ENCODE measurements at regions of chr12 and their contacts with region 1.

Region 1: DNA sequence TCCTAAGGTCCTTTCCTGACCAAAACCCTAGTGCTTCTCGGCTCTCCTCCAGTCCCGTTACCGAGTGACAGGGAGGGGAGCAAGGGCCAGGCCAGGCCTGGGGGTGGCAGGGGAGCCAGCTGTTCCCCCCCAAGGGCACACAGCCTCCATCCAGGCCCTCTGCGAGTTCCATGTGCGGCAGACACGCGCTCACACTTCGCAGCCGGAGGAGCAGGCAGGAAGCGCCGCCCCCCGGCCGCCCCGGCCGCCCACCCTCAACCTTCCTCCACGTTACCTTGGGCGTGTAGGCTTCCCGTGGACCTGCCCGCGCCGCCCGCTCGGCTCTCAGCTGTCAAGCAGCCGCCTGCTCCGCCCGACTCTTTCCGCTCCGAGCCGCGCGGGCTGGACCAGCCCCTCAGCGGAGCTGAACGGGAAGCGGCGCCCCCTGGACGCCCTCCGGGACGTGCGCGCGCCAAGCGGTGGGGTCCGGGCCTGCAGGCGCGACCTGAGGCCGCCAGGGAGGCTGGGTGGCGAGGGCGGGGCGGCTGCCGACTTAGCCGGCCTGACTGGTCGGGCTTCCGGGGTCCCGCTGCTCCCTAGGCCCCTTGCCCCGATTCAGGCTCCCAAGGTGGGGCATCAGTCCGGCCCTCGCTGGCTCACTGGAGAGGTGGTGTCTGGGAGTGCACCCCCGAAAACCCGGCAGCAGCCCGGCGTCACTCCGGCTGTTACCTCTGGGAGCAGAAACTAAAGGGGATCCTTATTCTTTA is at the start of gene CRACR2A:
- DNase-seq: peak; percentile 71 to 94 (median 85)
- ATAC-seq: peak; percentile 81
- H3K4me3 ChIP-seq: peak within 1 kb of the TSS; percentile 63 to 81
- H3K4me3 Mint-ChIP-seq: peak within 1 kb of the TSS; percentile 84
- H3K27ac ChIP-seq: peak within 1 kb of the TSS; percentile 94 to 95
- H3K27ac Mint-ChIP-seq: peak within 1 kb of the TSS; percentile 95
- H3K4me1 ChIP-seq: peaks cover 45% of the 10 kb centered on the region
- H3K4me1 Mint-ChIP-seq: peaks cover 62% of the 10 kb centered on the region
- H3K27me3 ChIP-seq: no peaks in the 10 kb centered on the region
- H3K27me3 Mint-ChIP-seq: no peaks in the 10 kb centered on the region
- CTCF ChIP-seq: peak; percentile 87
- total RNA-seq, gene CRACR2A: 17.9 TPM

Region 2: DNA sequence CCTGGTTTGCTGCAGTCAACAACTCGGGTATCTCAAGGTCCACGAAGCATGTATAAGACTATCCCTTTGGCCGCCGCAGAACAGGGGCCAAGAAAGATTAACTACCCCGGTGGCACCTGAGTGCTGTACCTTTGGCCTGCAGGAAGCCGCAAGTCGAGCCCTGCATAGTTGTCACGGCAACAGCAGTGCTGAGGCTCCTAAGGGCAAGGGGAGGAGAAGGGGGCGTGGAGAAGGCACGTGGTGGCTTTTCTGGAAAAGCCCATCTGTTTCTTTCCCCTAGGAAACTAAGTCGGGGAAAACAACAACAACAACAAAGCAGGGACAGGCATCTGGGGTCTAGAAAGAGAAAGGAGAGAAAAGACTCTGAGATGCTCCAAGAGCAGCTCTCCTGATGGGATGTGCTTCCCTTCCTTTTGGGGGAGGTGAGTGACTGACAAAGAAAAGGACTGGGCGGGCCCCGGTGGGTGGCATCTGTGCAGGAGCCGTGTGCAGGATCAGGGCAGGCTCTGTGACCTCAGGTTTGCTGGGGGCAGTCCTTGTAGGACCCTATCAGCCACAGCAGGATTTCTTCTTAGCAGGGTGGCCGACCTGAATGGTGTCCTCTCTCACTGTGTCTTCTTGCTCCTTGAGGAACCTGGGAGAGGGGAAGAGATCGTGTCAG is 138.0 kb before region 1 on chr12:
- CTCF ChIA-PET with region 1: no interaction called
- POLR2A ChIA-PET with region 1: no interaction called
- intact Hi-C with region 1: no loop called
- DNase-seq: no peak
- ATAC-seq: no peak
- H3K4me3 ChIP-seq: no peak overlapping the region
- H3K4me3 Mint-ChIP-seq: no peak overlapping the region
- H3K27ac ChIP-seq: no peak overlapping the region
- H3K27ac Mint-ChIP-seq: no peak overlapping the region
- H3K4me1 ChIP-seq: no peaks in the 10 kb centered on the region
- H3K4me1 Mint-ChIP-seq: no peaks in the 10 kb centered on the region
- H3K27me3 ChIP-seq: no peaks in the 10 kb centered on the region
- H3K27me3 Mint-ChIP-seq: no peaks in the 10 kb centered on the region
- CTCF ChIP-seq: no peak

Region 3: GRCh38 chr12:3658327-3659163 is 94.4 kb before region 1 on chr12:
- CTCF ChIA-PET with region 1: no interaction called
- POLR2A ChIA-PET with region 1: interaction called, 5 read pairs
- intact Hi-C with region 1: loop called in 1 of 2 experiments (anchors 2 kb)
- DNase-seq: peak in 7 of 9 experiments; percentile 7 to 60 (median 39)
- ATAC-seq: no peak
- H3K4me3 ChIP-seq: no peak overlapping the region
- H3K4me3 Mint-ChIP-seq: no peak overlapping the region
- H3K27ac ChIP-seq: no peak overlapping the region
- H3K27ac Mint-ChIP-seq: no peak overlapping the region
- H3K4me1 ChIP-seq: no peaks in the 10 kb centered on the region
- H3K4me1 Mint-ChIP-seq: no peaks in the 10 kb centered on the region
- H3K27me3 ChIP-seq: no peaks in the 10 kb centered on the region
- H3K27me3 Mint-ChIP-seq: no peaks in the 10 kb centered on the region
- CTCF ChIP-seq: peak; percentile 38

Region 4: GRCh38 chr12:3727877-3728632 is 24.9 kb before region 1 on chr12:
- CTCF ChIA-PET with region 1: interaction called, 8 read pairs
- POLR2A ChIA-PET with region 1: interaction called, 8 read pairs
- intact Hi-C with region 1: loop called (anchors 1 to 2 kb)
- DNase-seq: peak in 8 of 9 experiments; percentile 17 to 90 (median 44)
- ATAC-seq: peak; percentile 81
- H3K4me3 ChIP-seq: peak overlapping the region in 1 of 2 experiments; percentile 9
- H3K4me3 Mint-ChIP-seq: peak overlapping the region; percentile 60
- H3K27ac ChIP-seq: peak overlapping the region; percentile 37 to 71
- H3K27ac Mint-ChIP-seq: peak overlapping the region; percentile 89
- H3K4me1 ChIP-seq: peaks cover 34% of the 10 kb centered on the region
- H3K4me1 Mint-ChIP-seq: peaks cover 35% of the 10 kb centered on the region
- H3K27me3 ChIP-seq: no peaks in the 10 kb centered on the region
- H3K27me3 Mint-ChIP-seq: no peaks in the 10 kb centered on the region
- CTCF ChIP-seq: no peak

Region 5: DNA sequence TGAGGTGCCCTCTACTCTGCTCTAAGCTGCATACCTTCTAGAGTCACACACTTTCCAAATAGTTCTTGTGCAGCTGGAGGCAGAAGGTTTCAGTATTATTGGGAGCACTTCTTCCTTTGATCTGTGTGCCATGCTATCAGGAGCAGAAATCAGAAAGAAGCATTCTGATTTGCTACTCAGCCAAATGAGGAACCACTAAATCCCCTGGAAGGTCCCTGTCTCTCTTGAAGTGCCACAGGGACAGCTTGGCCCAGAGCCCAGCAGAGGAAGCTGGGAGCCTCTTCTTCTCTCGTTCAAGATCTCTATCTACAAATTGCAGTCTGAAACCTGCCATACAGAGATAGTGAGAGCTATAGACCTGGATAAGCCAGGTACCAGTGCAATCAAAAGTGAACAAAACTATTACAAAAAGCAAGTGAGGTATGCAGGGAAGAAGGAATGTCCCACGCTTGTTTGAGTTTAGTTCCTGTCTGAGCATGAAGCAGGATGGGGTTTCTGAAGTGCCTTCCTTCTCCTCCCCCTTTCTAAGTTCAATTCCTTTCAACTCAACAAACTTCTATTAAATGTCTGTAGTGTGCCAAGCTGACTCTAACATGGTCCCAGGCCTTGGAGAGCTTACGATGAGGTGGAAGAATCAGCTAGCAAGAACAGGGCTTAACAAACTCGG is 221.2 kb after region 1 on chr12:
- CTCF ChIA-PET with region 1: no interaction called
- POLR2A ChIA-PET with region 1: no interaction called
- intact Hi-C with region 1: loop called in 1 of 2 experiments (anchors 1 kb)
- DNase-seq: peak in 1 of 9 experiments; percentile 49
- ATAC-seq: peak; percentile 22
- H3K4me3 ChIP-seq: peak overlapping the region in 1 of 2 experiments; percentile 4
- H3K4me3 Mint-ChIP-seq: peak overlapping the region; percentile 69
- H3K27ac ChIP-seq: peak overlapping the region in 1 of 2 experiments; percentile 44
- H3K27ac Mint-ChIP-seq: peak overlapping the region; percentile 81
- H3K4me1 ChIP-seq: peaks cover 66% of the 10 kb centered on the region
- H3K4me1 Mint-ChIP-seq: peaks cover 77% of the 10 kb centered on the region
- H3K27me3 ChIP-seq: no peaks in the 10 kb centered on the region
- H3K27me3 Mint-ChIP-seq: no peaks in the 10 kb centered on the region
- CTCF ChIP-seq: no peak

Region 6: DNA sequence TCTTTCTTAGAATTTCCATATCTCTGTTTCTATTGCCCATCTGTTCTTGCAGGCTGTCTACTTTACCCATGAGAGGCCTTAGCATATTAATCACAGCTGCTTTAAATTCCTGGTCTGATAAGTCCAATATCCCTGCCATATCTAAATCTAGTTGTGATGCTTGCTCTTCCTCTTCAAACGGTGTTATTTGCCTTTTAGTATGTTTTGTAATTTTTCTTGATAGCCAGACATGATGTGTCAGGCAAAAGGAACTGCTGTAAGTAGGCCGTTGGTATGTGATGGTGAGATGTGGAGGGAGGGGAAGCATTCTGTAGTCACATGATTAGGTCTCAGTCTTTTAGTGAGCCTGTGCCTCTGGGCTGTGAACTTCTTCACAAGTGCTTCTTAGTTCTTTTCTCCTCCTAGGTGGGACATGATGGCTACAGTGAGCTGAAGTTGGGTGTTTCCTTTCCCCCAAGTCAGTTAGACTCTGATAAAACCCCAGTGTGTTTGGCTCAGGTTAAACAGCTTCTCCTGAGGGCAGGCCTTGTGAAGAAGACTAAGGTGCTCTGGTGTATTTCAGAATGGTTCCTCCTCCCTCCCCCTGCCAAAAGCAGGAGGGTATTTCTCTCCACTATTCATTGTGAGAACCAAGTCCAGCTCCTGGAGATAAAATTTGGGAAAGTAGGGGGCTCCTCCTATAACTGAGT is 316.2 kb after region 1 on chr12:
- CTCF ChIA-PET with region 1: no interaction called
- POLR2A ChIA-PET with region 1: no interaction called
- intact Hi-C with region 1: no loop called
- DNase-seq: peak in 1 of 9 experiments; percentile 5
- ATAC-seq: no peak
- H3K4me3 ChIP-seq: no peak overlapping the region
- H3K4me3 Mint-ChIP-seq: no peak overlapping the region
- H3K27ac ChIP-seq: no peak overlapping the region
- H3K27ac Mint-ChIP-seq: no peak overlapping the region
- H3K4me1 ChIP-seq: no peaks in the 10 kb centered on the region
- H3K4me1 Mint-ChIP-seq: no peaks in the 10 kb centered on the region
- H3K27me3 ChIP-seq: no peaks in the 10 kb centered on the region
- H3K27me3 Mint-ChIP-seq: peaks cover 1% of the 10 kb centered on the region
- CTCF ChIP-seq: no peak

Region 7: GRCh38 chr12:4320853-4321701 is 568.2 kb after region 1 on chr12 and contains the start of gene TIGAR:
- CTCF ChIA-PET with region 1: no interaction called
- POLR2A ChIA-PET with region 1: no interaction called
- intact Hi-C with region 1: loop called (anchors 5 to 10 kb)
- DNase-seq: peak; percentile 79 to 97 (median 90)
- ATAC-seq: peak; percentile 96
- H3K4me3 ChIP-seq: peak within 1 kb of the TSS; percentile 86 to 89
- H3K4me3 Mint-ChIP-seq: peak within 1 kb of the TSS; percentile 96
- H3K27ac ChIP-seq: peak within 1 kb of the TSS; percentile 81 to 83
- H3K27ac Mint-ChIP-seq: peak within 1 kb of the TSS; percentile 95
- H3K4me1 ChIP-seq: peaks cover 25% of the 10 kb centered on the region
- H3K4me1 Mint-ChIP-seq: peaks cover 40% of the 10 kb centered on the region
- H3K27me3 ChIP-seq: no peaks in the 10 kb centered on the region
- H3K27me3 Mint-ChIP-seq: no peaks in the 10 kb centered on the region
- CTCF ChIP-seq: no peak
- total RNA-seq, gene TIGAR: 14.0 to 15.8 TPM

Region 8: GRCh38 chr12:4538207-4539160 is 785.6 kb after region 1 on chr12 and contains the start of gene RAD51AP1:
- CTCF ChIA-PET with region 1: no interaction called
- POLR2A ChIA-PET with region 1: interaction called, 3 read pairs
- intact Hi-C with region 1: loop called in 1 of 2 experiments (anchors 10 kb)
- DNase-seq: peak; percentile 89 to 98 (median 94)
- ATAC-seq: peak; percentile 99
- H3K4me3 ChIP-seq: peak within 1 kb of the TSS; percentile 68 to 97
- H3K4me3 Mint-ChIP-seq: peak within 1 kb of the TSS; percentile 98
- H3K27ac ChIP-seq: peak within 1 kb of the TSS; percentile 85 to 97
- H3K27ac Mint-ChIP-seq: peak within 1 kb of the TSS; percentile 98
- H3K4me1 ChIP-seq: peaks cover 7% of the 10 kb centered on the region
- H3K4me1 Mint-ChIP-seq: peaks cover 26% of the 10 kb centered on the region
- H3K27me3 ChIP-seq: no peaks in the 10 kb centered on the region
- H3K27me3 Mint-ChIP-seq: no peaks in the 10 kb centered on the region
- CTCF ChIP-seq: no peak
- total RNA-seq, gene RAD51AP1: 0.87 to 1.6 TPM

Measured in CD8-positive, alpha-beta T cell (primary cell).